Activated B cell treated with CpG ODN at 0.5 μM for 24 hours (primary cell): ENCODE measurements at regions of chr16 and their contacts with region 1.

Region 1: DNA sequence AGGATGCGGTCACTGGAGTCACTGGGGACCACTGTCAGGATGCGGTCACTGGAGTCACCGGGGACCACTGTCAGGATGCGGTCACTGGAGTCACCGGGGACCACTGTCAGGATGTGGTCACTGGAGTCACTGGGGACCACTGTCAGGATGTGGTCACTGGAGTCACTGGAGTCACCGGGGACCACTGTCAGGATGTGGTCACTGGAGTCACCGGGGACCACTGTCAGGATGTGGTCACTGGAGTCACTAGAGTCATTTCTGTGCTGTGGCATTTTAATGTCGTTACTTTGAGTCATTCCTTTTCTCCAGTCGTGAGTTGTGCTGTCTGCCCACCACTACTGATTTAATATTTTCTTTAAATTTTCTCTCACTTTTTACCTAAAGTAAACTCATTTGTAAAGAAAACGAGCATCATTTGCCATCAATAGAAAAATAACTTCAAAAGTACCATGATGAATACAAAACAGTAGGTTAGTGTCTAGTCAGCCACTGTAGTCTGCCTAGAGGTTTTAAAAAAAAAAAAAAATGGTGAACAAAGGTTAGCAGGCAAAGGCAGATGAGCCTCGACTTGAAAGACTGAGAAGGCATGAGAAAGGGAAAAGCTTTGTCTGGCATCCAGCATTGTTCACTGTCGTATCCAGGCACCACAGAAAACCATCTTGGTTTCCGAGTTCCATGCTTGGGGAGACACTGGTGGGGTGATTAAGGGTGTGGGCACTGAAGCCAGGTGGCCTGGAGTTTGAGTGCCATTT is 346.6 kb downstream of the SNX29 start:
- DNase-seq: peak; percentile 48
- ATAC-seq: peak; percentile 79
- H3K4me3 Mint-ChIP-seq: no peak overlapping the region
- H3K27ac Mint-ChIP-seq: peak overlapping the region; percentile 81
- H3K4me1 Mint-ChIP-seq: peaks cover 67% of the 10 kb centered on the region
- H3K27me3 Mint-ChIP-seq: no peaks in the 10 kb centered on the region
- CTCF ChIP-seq: no peak

Region 2: GRCh38 chr16:12228602-12229499 is 94.3 kb before region 1 on chr16:
- CTCF ChIA-PET with region 1: no interaction called
- POLR2A ChIA-PET with region 1: no interaction called
- intact Hi-C with region 1: loop called (anchors 5 kb)
- DNase-seq: peak; percentile 20
- ATAC-seq: peak; percentile 49
- H3K4me3 Mint-ChIP-seq: no peak overlapping the region
- H3K27ac Mint-ChIP-seq: peak overlapping the region; percentile 38
- H3K4me1 Mint-ChIP-seq: peaks cover 38% of the 10 kb centered on the region
- H3K27me3 Mint-ChIP-seq: no peaks in the 10 kb centered on the region
- CTCF ChIP-seq: no peak

Region 3: DNA sequence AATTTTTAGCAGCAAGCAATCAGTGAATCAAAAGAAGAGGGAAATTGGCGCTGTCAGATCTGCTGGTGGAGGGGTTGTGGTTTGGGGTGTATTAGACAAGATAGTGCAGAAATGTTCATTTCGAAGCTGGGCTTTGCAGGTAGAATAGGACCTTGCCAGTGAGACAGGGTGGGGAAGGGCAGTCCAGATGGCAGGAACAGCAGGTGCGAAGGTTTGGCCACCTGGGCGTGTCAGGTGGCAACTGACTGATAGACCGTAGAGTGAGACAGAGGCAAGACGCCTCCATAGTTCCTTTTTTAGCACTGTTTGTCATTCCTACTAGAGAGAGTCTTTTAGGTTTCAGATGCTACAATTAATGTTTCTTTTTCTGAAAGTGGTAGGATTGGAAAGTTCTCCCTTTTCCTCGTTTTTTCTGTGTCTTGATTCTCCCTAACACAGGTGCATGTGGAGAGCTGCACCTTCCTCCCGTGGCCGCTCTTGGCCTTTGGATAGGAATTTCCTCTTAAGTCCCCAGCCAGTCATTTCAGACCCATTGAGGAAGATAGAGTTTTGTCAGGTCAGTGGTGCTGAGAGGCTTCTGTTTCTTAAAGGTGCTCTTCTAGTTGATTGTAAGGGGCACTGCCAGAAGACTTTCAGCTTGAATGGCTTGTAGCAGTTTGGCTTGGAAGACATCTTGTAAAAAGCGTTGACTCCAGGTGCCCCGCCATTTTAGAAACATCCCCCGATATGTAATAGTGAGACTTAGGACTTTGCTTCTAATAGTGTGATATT is 31.0 kb before region 1 on chr16:
- CTCF ChIA-PET with region 1: no interaction called
- POLR2A ChIA-PET with region 1: no interaction called
- intact Hi-C with region 1: no loop called
- DNase-seq: no peak
- ATAC-seq: peak; percentile 72
- H3K4me3 Mint-ChIP-seq: peak overlapping the region; percentile 29
- H3K27ac Mint-ChIP-seq: peak overlapping the region; percentile 72
- H3K4me1 Mint-ChIP-seq: peaks cover 70% of the 10 kb centered on the region
- H3K27me3 Mint-ChIP-seq: no peaks in the 10 kb centered on the region
- CTCF ChIP-seq: no peak